ENCODE measurements at regions of chr11 and their contacts with region 1.

Region 1: GRCh38 chr11:66393954-66394353 is 22.4 kb upstream of the SLC29A2 start:
- DNase-seq: no peak
- H3K4me3 ChIP-seq: no peak overlapping the region
- CTCF ChIP-seq: no peak

Region 2: DNA sequence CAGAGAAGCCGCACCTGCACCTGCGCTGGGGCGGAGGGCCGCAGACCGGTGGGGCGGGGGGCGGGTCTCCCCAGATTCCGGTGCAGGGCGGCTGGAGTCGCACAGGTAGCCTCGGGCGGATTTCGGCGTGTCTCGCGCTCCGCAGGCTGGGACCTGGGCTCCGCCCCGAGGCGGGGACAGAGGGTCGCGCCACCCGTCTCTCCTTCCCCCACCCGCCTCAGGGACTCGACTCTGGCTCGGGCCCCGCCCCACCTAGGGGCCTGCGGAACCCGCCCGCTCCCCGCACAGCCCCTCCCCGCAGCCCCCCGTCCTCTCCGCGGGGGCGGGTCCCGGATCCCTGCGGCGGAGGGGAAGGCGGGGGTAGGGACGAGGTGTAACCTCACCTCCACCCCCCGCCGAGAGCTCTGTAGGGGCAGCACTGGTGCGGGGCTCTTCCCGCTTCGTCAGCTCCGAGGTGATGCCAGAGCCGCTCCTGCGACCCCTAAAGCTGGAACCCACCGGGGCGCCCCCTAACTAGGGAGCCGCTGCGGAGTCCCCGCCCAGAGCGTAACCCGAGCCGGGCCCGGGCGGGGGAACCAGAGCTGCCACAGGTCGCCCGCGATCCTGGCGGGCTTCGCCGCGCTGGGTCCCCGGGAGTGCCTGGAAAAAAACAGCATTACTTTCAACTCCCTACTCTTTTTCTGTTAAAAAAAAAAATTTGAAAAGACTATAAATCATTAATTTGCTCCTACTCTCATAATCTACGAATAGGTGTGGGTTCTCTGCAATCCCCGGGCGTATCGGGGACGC is 22.1 kb before region 1 on chr11 and contains the start of gene SLC29A2:
- CTCF ChIA-PET with region 1: interaction called, 197 read pairs
- POLR2A ChIA-PET with region 1: no interaction called
- DNase-seq: no peak
- H3K4me3 ChIP-seq: peak within 1 kb of the TSS; percentile 61
- CTCF ChIP-seq: no peak